ENCODE measurements at regions of chr17 and their contacts with region 1.

Region 1: DNA sequence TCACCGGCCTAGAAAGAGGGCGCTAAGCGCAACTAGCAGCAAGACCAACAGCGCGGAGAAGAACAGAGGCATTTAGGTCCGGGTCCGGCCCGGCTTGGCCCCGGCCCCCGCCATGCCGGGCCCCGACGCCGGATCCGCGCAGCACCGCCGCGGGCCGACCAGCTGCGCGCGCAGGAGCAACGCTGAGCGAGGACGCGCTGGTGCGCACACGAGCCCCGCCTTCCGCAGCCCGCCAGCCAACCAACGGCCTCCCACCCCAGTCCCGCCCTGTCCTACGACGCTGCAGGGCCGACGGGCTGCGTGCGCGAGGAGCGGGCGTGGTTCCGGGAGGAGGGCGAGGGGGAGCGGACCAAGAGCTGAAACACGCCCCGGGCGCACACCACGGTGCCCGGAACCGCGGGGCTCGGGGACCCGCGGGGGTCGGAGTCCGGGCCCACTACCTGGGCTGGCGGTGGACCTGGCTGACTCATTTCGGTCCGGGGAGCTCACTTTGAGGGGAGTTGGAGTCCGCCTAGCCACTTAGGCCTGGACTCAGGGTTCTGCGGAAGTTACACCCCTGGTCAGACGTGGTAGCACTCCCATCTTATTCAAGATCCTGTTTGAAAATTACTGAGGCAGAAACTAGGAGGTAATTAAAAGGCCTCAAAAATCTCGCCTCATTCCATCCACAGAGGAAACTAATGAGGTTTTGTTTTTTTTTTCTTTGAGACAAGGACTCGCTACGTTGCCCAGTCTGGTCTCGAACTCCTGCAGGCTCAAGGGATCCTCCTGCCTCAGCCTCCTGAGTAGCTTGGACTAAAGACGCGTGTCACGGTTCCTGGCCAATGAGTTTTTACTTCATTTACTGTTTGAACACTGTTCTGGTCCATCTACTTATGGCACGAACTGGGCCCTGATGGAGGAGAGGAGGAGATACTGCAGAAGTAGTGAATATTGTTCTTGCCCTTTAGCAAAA is at the start of gene BLTP2:
- DNase-seq: peak; percentile 86
- ATAC-seq: peak; percentile 99
- H3K4me3 ChIP-seq: peak within 1 kb of the TSS; percentile 77 to 83
- H3K27ac ChIP-seq: peak within 1 kb of the TSS; percentile 74
- H3K4me1 ChIP-seq: peaks cover 12 to 29% of the 10 kb centered on the region in 2 experiments
- H3K27me3 ChIP-seq: no peaks in the 10 kb centered on the region
- CTCF ChIP-seq: no peak
- POLR2A ChIP-seq: peak; percentile 73
- RAD21 ChIP-seq: no peak
- total RNA-seq, gene BLTP2: 140 TPM

Region 2: GRCh38 chr17:28661635-28662537 is 16.6 kb after region 1 on chr17 and contains the starts of genes SDF2 and SUPT6H:
- CTCF ChIA-PET with region 1: interaction called, 14 read pairs
- POLR2A ChIA-PET with region 1: interaction called, 19 read pairs
- RAD21 ChIA-PET with region 1: no interaction called
- intact Hi-C with region 1: no loop called
- DNase-seq: peak; percentile 74
- ATAC-seq: peak; percentile 90
- H3K4me3 ChIP-seq: peak within 1 kb of the TSS; percentile 92 to 98
- H3K27ac ChIP-seq: peak within 1 kb of the TSS; percentile 92
- H3K4me1 ChIP-seq: peaks cover 12 to 18% of the 10 kb centered on the region in 2 experiments; a peak in 3 of 4 replicates
- H3K27me3 ChIP-seq: no peaks in the 10 kb centered on the region
- CTCF ChIP-seq: no peak
- POLR2A ChIP-seq: peak; percentile 55
- RAD21 ChIP-seq: no peak
- total RNA-seq, gene SDF2: 41.3 TPM
- total RNA-seq, gene SUPT6H: 62.1 TPM

Region 3: GRCh38 chr17:28675980-28676379 is 30.7 kb after region 1 on chr17:
- CTCF ChIA-PET with region 1: interaction called, 5 read pairs
- POLR2A ChIA-PET with region 1: interaction called, 3 read pairs
- RAD21 ChIA-PET with region 1: no interaction called
- intact Hi-C with region 1: loop called (anchors 1 kb)
- DNase-seq: peak; percentile 10
- ATAC-seq: peak; percentile 89
- H3K4me3 ChIP-seq: no peak overlapping the region
- H3K27ac ChIP-seq: no peak overlapping the region
- H3K4me1 ChIP-seq: no peaks in the 10 kb centered on the region
- H3K27me3 ChIP-seq: no peaks in the 10 kb centered on the region
- CTCF ChIP-seq: peak; percentile 44 to 76 (median 70); a peak in 5 of 6 replicates
- POLR2A ChIP-seq: no peak
- RAD21 ChIP-seq: peak; percentile 54

Region 4: GRCh38 chr17:28717578-28718333 is 72.5 kb after region 1 on chr17 and contains the start of gene RAB34:
- CTCF ChIA-PET with region 1: interaction called, 4 read pairs
- POLR2A ChIA-PET with region 1: interaction called, 12 read pairs
- RAD21 ChIA-PET with region 1: no interaction called
- intact Hi-C with region 1: no loop called
- DNase-seq: no peak
- ATAC-seq: no peak
- H3K4me3 ChIP-seq: peak within 1 kb of the TSS; percentile 98 to 99; a peak in 3 of 4 replicates
- H3K27ac ChIP-seq: peak within 1 kb of the TSS; percentile 89
- H3K4me1 ChIP-seq: peaks cover 22 to 32% of the 10 kb centered on the region in 2 experiments
- H3K27me3 ChIP-seq: no peaks in the 10 kb centered on the region
- CTCF ChIP-seq: no peak
- POLR2A ChIP-seq: peak; percentile 67
- RAD21 ChIP-seq: no peak
- total RNA-seq, gene RAB34: 0.59 TPM

Region 5: GRCh38 chr17:28902819-28903545 is 257.7 kb after region 1 on chr17 and contains the start of gene DHRS13:
- CTCF ChIA-PET with region 1: no interaction called
- POLR2A ChIA-PET with region 1: no interaction called
- RAD21 ChIA-PET with region 1: no interaction called
- intact Hi-C with region 1: loop called (anchors 10 kb)
- DNase-seq: peak; percentile 91
- ATAC-seq: peak; percentile 95
- H3K4me3 ChIP-seq: peak within 1 kb of the TSS; percentile 70 to 84
- H3K27ac ChIP-seq: peak within 1 kb of the TSS; percentile 69
- H3K4me1 ChIP-seq: peaks cover 11 to 22% of the 10 kb centered on the region in 2 experiments; a peak in 3 of 4 replicates
- H3K27me3 ChIP-seq: no peaks in the 10 kb centered on the region
- CTCF ChIP-seq: peak; percentile 96 to 99 (median 97)
- POLR2A ChIP-seq: peak; percentile 58
- RAD21 ChIP-seq: peak; percentile 68
- total RNA-seq, gene DHRS13: 13.5 TPM